ENCODE measurements at regions of chr2 and their contacts with region 1.

Region 1: DNA sequence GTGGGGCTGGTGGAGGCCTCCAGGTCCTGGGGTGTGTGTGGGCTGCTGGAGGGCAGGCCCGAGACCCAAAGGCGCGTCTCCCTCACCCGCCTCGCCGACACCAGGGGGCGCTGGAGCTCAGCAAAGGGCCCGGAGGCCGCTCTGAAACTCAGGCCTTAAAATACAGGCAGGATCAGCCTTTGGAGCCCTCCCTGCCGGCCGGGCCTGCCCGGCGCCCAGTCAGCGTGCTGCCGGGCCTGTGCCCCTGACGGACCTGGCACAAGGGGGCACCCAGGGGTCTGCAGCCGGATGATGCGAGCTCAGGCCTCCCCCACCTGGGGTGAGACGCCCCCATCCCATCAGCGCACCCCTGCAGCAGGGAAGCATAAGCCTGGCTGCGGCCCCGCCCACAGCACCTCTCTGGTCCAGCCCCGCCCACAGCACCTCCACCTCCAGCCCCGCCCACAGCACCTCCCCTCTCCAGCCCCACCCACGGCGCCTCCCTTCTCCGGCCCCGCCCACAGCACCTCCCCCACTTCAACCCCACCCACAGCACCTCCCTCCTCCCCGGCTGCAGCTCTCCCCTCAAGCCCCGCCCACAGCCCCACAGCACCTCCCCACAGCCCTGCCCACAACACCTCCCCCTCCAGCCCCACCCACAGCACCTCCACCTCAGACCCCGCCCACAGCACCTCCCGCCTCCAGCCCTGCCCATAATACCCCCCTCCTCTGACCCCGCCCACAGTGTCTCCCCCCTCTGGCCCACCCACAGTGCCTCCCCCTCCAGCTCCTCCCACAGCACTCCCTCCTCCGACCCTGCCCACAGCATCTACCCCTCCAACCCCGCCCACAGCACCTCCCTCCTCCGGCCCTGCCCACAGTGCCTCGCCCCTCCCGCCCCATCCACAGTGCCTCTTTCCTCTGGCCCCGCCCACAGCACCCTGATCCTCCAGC is 92.8 kb upstream of the OTOS start:
- DNase-seq: peak; percentile 90
- H3K4me3 ChIP-seq: peak overlapping the region; percentile 26 to 43; a peak in 2 of 4 replicates
- H3K27ac ChIP-seq: no peak overlapping the region
- H3K4me1 ChIP-seq: peaks cover 0 to 23% of the 10 kb centered on the region in 2 experiments; a peak in 1 of 4 replicates
- H3K27me3 ChIP-seq: no peaks in the 10 kb centered on the region
- CTCF ChIP-seq: peak; percentile 48
- EP300 ChIP-seq: no peak
- RAD21 ChIP-seq: peak; percentile 80

Region 2: GRCh38 chr2:239644011-239644410 is 589.2 kb before region 1 on chr2:
- CTCF ChIA-PET with region 1: no interaction called
- POLR2A ChIA-PET with region 1: no interaction called
- DNase-seq: no peak
- H3K4me3 ChIP-seq: no peak overlapping the region
- H3K27ac ChIP-seq: no peak overlapping the region
- H3K4me1 ChIP-seq: no peaks in the 10 kb centered on the region; a peak in 1 of 4 replicates
- H3K27me3 ChIP-seq: no peaks in the 10 kb centered on the region
- CTCF ChIP-seq: no peak
- EP300 ChIP-seq: no peak
- RAD21 ChIP-seq: no peak

Region 3: GRCh38 chr2:239978411-239978810 is 254.8 kb before region 1 on chr2:
- CTCF ChIA-PET with region 1: no interaction called
- POLR2A ChIA-PET with region 1: no interaction called
- DNase-seq: no peak
- H3K4me3 ChIP-seq: no peak overlapping the region
- H3K27ac ChIP-seq: no peak overlapping the region
- H3K4me1 ChIP-seq: no peaks in the 10 kb centered on the region
- H3K27me3 ChIP-seq: no peaks in the 10 kb centered on the region
- CTCF ChIP-seq: no peak
- EP300 ChIP-seq: no peak
- RAD21 ChIP-seq: no peak

Region 4: DNA sequence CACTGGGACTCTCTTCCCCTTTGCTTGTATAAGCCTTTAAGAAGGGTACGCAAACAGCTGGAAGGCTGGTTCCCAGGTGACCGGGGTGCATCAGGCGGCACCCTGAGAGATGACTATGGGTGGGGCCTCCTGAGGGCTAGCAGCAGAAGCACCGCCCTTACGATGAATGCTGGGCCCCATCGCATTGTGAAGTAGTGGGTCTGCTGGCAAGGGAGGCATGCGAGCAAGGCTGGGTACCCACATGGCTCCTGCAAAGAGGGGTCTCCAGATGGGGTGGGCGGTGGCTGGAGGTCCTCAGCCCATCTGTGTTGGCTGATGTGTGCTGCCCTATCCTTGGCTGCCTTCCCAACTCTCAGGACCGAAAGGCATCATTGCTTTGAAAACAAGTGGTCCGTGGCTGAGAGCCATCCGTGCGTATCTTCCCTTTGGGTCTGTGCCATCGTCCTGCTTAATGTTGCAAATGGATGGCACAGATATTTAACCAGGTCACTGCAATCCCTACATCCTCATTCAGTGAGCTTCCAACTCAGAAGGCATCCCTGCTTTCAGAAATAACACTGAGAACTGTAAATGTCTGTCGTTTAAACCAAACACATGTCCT is 118.7 kb after region 1 on chr2:
- CTCF ChIA-PET with region 1: interaction called, 12 read pairs
- POLR2A ChIA-PET with region 1: no interaction called
- DNase-seq: peak; percentile 86
- H3K4me3 ChIP-seq: no peak overlapping the region
- H3K27ac ChIP-seq: peak overlapping the region in 1 of 2 experiments; percentile 82; a peak in 2 of 4 replicates
- H3K4me1 ChIP-seq: peaks cover 0 to 45% of the 10 kb centered on the region in 2 experiments; a peak in 2 of 4 replicates
- H3K27me3 ChIP-seq: no peaks in the 10 kb centered on the region
- CTCF ChIP-seq: no peak
- EP300 ChIP-seq: peak in 1 of 2 experiments; percentile 78; a peak in 2 of 4 replicates
- RAD21 ChIP-seq: 0 out of 2 replicates have a peak, but pooled peaks have one; percentile 2

Region 5: GRCh38 chr2:240441331-240441992 is 208.2 kb after region 1 on chr2:
- CTCF ChIA-PET with region 1: interaction called, 29 read pairs
- POLR2A ChIA-PET with region 1: no interaction called
- DNase-seq: no peak
- H3K4me3 ChIP-seq: no peak overlapping the region
- H3K27ac ChIP-seq: no peak overlapping the region
- H3K4me1 ChIP-seq: peaks cover 0 to 11% of the 10 kb centered on the region in 2 experiments; a peak in 1 of 4 replicates
- H3K27me3 ChIP-seq: no peaks in the 10 kb centered on the region
- CTCF ChIP-seq: no peak
- EP300 ChIP-seq: no peak
- RAD21 ChIP-seq: no peak

Measured in SK-N-SH (cell line).